ENCODE measurements at regions of chr9 and their contacts with region 1.

Region 1: GRCh38 chr9:32378993-32379729 is 5.3 kb upstream of the ACO1 start:
- DNase-seq: peak in 2 of 10 donors; percentile 28 to 42
- H3K4me3 ChIP-seq: peak overlapping the region in 32 of 59 donors; percentile 2 to 42 (median 16)
- H3K27ac ChIP-seq: peak overlapping the region in 16 of 59 donors; percentile 7 to 70 (median 33)
- H3K27me3 ChIP-seq: no peaks in the 10 kb centered on the region
- CTCF ChIP-seq: peak; percentile 51 to 94 (median 81)

Region 2: DNA sequence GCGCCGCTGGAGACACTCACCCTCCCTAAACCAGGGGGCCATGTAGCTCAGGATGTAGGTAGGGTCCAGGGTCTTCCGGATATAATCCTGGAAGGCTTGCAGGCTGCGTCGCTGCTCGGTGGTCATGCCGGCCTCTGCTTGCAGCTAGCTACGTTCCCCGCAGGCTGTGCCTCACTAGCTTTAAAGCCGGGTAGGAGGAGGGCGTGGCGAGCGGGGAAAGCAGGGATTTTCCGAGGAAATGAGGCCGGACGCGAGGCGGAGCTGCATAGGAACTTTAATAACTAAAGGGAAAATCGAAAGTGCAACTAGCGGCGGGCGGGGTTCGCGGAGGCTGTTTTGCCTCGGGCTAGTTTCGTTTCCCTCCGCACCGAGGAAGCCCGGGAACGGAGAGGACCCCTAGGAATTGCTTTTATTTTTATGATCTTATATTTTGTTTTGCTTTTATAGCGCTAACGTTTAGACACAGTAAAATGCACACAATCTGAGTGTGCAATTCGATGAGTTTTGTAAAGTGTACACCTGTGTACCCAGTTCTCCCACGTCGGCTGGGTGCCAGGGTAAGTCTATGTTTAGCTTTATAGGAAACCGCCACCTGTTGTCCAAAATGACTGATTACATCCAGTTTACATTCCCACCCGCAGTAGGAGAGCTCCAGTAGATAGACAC is 147.0 kb after region 1 on chr9 and contains the start of gene RIGI:
- intact Hi-C with region 1: loop called in 1 of 2 experiments (anchors 2 kb)
- DNase-seq: peak; percentile 74 to 88 (median 85)
- H3K4me3 ChIP-seq: peak within 1 kb of the TSS; percentile 51 to 95 (median 78)
- H3K27ac ChIP-seq: peak within 1 kb of the TSS; percentile 29 to 95 (median 87)
- H3K27me3 ChIP-seq: no peaks in the 10 kb centered on the region
- CTCF ChIP-seq: peak in 53 of 56 donors; percentile 7 to 73 (median 45)
- total RNA-seq, gene RIGI: 4.1 to 28.6 (median 7.2) TPM

Region 3: DNA sequence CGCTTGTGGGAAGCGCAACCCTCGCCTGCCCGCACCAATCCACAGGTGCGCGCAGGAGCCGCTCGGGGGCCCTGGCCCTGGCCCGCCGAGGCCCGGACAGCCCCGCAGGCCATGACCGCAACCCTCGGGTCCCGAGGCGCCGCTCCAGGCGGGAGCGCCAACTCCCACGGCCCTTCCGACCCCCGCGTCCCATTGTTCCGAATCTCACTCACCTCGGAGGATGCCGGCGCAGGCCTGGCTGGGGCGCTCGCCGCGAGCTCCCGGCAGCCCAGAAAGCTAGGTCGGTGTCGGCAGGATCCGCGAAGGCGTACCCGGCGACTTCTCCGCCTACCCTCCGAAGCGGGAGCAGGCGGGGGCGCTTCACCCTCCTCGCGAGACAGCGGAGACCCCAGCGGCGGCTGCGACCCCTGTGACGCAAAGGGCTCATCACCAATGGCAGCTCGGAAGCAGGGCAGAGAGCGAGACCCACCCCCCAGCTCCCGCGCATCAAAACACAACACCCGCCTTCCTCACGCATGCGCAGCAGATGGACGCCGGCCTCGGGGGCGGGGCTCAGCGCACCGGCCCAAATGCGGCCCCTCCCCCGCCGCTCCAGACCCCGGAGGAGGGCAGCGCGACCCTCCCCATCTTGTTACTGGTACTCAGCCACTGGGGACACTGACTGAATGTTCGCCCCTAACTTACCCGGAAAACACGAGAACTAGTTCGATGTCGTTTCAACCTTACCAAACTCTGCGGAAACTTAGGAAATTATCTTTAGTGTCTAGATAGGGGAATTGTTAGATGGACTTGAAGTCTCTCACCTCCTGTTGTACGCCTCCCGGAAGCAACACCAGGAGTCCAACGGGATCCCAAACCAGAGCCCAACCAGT is 171.6 kb after region 1 on chr9:
- intact Hi-C with region 1: loop called in 1 of 2 experiments (anchors 1 kb)
- DNase-seq: peak; percentile 90 to 96 (median 94)
- H3K4me3 ChIP-seq: peak overlapping the region; percentile 58 to 99 (median 89)
- H3K27ac ChIP-seq: peak overlapping the region; percentile 84 to 100 (median 98)
- H3K27me3 ChIP-seq: no peaks in the 10 kb centered on the region
- CTCF ChIP-seq: peak in 35 of 56 donors; percentile 5 to 54 (median 30)

Region 4: GRCh38 chr9:32579706-32580331 is 200.7 kb after region 1 on chr9:
- intact Hi-C with region 1: loop called in 1 of 2 experiments (anchors 1 kb)
- DNase-seq: peak; percentile 48 to 87 (median 68)
- H3K4me3 ChIP-seq: peak overlapping the region in 26 of 59 donors; percentile 1 to 50 (median 24)
- H3K27ac ChIP-seq: no peak overlapping the region
- H3K27me3 ChIP-seq: peaks cover 0 to 4% (median 0%) of the 10 kb centered on the region in 45 donors
- CTCF ChIP-seq: peak; percentile 87 to 100 (median 96)

Region 5: DNA sequence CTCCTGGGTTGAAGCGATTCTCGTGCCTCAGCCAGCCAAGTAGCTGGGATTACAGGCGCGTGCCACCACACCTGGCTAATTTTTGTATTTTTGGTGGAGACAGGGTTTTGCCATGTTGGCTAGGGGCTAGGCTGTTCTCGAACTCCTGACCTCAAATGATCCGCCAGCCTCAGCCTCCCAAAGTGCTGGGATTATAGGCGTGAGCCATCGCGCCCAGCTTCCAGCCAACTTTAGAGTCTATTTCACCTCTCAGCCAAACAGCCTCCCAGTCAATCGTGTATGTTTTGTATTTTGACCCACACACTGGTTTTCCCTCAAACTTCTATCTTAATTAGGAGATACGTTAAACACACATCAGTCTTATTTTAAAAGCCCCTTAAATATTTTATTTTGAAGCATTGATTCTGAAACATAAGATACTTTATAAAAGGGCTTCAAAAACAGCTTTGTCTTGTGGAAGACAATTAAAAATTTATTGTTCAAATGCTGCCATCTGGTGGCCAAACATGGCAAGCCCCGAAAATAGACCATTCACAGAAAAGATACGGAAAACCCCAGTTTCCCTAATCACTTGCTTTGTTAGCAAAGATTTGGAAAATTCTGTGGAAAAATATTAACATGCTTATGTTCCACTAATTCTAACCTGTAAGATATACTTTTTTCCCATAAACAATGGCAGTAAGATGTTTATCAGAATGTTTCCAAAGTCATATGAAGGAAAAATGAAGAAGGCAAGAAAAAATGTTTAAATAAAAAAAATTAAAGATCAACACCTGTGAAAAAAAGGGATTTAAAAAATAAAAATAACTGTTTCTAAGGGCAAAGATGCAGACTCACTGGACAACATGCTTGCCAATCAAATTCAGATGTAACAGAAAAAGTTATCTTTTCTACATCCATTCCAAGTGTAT is 589.2 kb after region 1 on chr9:
- intact Hi-C with region 1: loop called (anchors 2 to 5 kb)
- DNase-seq: peak in 8 of 10 donors; percentile 51 to 81 (median 60)
- H3K4me3 ChIP-seq: peak overlapping the region in 2 of 59 donors; percentile 16 to 19
- H3K27ac ChIP-seq: no peak overlapping the region
- H3K27me3 ChIP-seq: no peaks in the 10 kb centered on the region
- CTCF ChIP-seq: peak; percentile 84 to 99 (median 93)

Measured in dorsolateral prefrontal cortex (tissue), 120 donors.